Panc1 (cell line): ENCODE measurements at regions of chr20 and their contacts with region 1.

Region 1: GRCh38 chr20:62653951-62654685 is 11.8 kb downstream of the SLCO4A1 start:
- DNase-seq: no peak
- ATAC-seq: no peak
- H3K4me3 ChIP-seq: no peak overlapping the region
- H3K27ac ChIP-seq: peak overlapping the region; percentile 71
- H3K4me1 ChIP-seq: peaks cover 95% of the 10 kb centered on the region
- H3K27me3 ChIP-seq: no peaks in the 10 kb centered on the region
- CTCF ChIP-seq: no peak

Region 2: DNA sequence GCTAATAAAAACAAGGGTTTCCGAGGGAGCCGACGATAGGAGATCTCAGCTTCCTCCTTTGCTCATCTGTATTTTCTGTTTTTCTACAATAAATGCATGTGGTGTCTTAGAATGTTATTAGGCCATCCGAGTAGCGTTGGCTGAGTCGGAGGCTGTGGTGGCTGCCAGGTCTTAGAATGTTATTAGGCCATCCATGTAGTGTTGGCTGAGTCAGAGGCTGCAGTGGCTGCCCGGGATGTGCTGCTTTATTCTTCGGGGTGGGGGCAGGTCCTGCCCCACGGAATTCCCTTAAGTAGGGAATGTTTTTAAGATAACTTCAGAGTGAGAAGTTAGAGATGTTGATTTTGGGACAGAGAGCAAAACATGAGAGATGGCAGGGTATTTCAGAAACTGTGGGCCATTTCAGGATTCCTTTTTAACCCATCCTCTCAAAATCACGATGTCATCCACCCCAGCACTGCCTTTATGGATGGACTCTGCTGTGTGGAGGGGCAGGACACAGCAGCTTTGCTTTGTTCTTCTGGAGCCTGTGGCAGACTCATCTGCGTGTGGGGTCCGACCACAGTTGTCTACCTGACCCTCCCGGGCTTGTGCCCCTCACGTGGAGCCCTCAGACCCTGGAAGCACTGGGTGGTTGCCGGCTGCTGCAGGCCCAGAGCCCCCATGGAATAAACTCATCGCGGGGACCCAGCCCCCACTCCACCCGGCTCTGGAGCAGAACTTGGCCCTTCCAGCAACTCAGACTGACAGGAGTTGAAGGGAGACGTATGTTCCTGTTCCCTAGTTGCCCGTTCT is 395.4 kb before region 1 on chr20:
- CTCF ChIA-PET with region 1: no interaction called
- POLR2A ChIA-PET with region 1: no interaction called
- in situ Hi-C with region 1: no loop called
- intact Hi-C with region 1: no loop called
- DNase-seq: no peak
- ATAC-seq: no peak
- H3K4me3 ChIP-seq: no peak overlapping the region
- H3K27ac ChIP-seq: no peak overlapping the region
- H3K4me1 ChIP-seq: no peaks in the 10 kb centered on the region
- H3K27me3 ChIP-seq: no peaks in the 10 kb centered on the region
- CTCF ChIP-seq: no peak

Region 3: DNA sequence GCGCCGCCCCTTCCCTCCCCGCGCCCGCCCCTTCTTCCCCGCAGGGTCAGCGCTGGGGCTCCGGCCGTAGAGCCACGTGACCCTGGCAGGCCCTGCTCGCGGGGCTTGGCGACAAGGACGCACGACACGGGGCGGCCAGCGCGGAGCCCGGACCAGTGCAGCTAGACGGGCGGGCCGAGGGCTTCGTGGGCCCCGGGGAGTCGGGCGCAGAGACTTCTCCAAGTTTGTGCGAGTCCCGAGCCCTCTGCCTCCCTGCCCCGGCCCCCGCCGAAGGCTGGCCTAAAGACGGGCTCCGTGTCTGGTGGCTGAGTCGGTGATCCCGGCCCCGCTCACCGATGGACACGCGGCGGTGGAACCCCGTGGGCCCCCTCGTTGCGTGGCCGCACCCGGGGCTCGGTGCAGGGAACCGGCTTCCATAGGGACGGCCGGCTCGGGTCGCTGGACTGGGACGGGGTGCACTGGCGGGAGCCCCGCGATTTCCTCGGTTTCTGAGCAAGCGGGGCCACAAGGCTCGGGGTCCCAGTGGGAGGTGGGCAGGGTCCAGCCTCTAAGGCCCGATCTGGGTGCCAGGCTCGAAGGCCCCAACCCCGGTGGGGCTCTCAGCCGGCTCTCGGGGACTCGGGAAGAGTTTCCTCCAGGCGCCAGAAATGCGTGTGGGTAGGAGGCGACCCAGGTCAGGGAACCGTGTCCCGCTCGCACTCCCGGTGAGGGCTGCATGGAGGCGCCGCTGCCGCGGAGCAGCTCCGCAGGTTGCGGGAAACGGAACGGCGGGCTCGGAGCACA is 177.9 kb before region 1 on chr20:
- CTCF ChIA-PET with region 1: no interaction called
- POLR2A ChIA-PET with region 1: interaction called, 17 read pairs
- in situ Hi-C with region 1: no loop called
- intact Hi-C with region 1: no loop called
- DNase-seq: no peak
- ATAC-seq: peak; percentile 67
- H3K4me3 ChIP-seq: peak overlapping the region; percentile 46 to 76
- H3K27ac ChIP-seq: peak overlapping the region; percentile 95
- H3K4me1 ChIP-seq: peaks cover 37% of the 10 kb centered on the region
- H3K27me3 ChIP-seq: no peaks in the 10 kb centered on the region
- CTCF ChIP-seq: no peak

Region 4: GRCh38 chr20:62516345-62516744 is 137.8 kb before region 1 on chr20:
- CTCF ChIA-PET with region 1: no interaction called
- POLR2A ChIA-PET with region 1: no interaction called
- in situ Hi-C with region 1: no loop called
- intact Hi-C with region 1: no loop called
- DNase-seq: no peak
- ATAC-seq: peak; percentile 93
- H3K4me3 ChIP-seq: no peak overlapping the region
- H3K27ac ChIP-seq: peak overlapping the region; percentile 57; the same call in 1 of the 2 replicates
- H3K4me1 ChIP-seq: peaks cover 8% of the 10 kb centered on the region; the same call in 1 of the 2 replicates
- H3K27me3 ChIP-seq: no peaks in the 10 kb centered on the region
- CTCF ChIP-seq: peak; percentile 92